ENCODE measurements at regions of chr1 and their contacts with region 1.

Region 1: DNA sequence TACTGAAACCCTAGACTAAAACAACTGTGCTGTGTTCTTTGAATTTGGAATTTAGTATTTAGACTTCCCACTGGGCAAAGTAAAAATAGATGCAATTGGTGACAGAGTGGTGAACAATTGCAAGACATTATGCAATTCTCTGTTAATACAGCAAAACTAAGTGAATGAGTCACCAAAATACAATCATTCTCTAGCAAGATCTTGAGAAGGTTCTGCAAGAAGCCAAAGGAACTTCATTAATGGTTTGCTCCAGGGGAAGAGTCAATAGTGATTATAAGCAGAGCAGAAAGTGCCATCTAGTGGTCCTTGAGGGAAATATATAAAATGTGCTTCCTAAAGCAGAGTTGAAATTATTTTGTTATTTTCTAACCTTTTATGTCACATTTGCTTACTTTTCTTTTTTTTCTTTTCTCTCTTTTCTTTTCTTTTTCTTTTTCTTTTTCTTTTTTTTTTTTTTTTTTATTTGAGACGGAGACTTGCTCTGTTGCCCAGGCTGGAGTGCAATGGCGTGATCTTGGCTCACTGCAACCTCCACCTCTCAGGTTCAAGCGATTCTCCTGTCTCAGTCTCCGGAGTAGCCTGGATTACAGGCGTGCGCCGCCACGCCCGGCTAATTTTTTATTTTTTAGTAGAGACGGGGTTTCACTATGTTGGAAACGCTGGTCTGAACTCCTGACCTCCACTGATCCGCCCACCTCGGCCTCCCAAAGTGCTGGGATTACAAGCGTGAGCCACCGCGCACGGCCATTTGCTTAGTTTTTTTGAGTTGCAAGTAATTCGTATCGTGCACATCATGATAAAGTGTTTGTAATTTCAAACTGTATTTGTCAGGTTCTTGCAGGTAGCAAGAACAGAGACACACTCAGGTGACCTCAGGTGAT is 99.2 kb downstream of the CTH start:
- DNase-seq: no peak
- H3K4me3 ChIP-seq: no peak overlapping the region
- H3K27ac ChIP-seq: no peak overlapping the region
- H3K4me1 ChIP-seq: no peaks in the 10 kb centered on the region
- H3K27me3 ChIP-seq: no peaks in the 10 kb centered on the region
- CTCF ChIP-seq: peak; percentile 50 to 67 (median 62)

Region 2: DNA sequence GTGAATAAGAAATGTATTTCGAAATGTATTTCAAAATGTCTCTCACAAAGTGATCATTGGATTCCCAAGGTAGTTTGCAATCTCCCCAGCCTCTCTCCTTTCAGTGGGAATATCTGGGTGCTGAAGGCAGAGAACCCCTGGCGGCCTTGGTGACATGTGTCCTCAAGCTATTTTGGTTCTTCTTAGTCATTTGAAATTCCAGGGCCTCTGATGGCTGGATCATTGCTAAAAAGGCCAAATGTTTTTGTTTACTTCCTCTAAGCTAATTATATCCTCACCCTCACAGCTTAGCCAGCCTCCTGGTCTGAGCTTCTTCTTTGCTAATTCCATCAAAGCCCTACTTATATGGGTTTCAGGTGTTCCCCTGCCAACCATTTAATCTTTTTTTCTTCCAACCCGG is 376.1 kb before region 1 on chr1:
- intact Hi-C with region 1: loop called (anchors 2 kb)
- DNase-seq: no peak
- H3K4me3 ChIP-seq: no peak overlapping the region
- H3K27ac ChIP-seq: no peak overlapping the region
- H3K4me1 ChIP-seq: no peaks in the 10 kb centered on the region
- H3K27me3 ChIP-seq: no peaks in the 10 kb centered on the region
- CTCF ChIP-seq: no peak

Region 3: DNA sequence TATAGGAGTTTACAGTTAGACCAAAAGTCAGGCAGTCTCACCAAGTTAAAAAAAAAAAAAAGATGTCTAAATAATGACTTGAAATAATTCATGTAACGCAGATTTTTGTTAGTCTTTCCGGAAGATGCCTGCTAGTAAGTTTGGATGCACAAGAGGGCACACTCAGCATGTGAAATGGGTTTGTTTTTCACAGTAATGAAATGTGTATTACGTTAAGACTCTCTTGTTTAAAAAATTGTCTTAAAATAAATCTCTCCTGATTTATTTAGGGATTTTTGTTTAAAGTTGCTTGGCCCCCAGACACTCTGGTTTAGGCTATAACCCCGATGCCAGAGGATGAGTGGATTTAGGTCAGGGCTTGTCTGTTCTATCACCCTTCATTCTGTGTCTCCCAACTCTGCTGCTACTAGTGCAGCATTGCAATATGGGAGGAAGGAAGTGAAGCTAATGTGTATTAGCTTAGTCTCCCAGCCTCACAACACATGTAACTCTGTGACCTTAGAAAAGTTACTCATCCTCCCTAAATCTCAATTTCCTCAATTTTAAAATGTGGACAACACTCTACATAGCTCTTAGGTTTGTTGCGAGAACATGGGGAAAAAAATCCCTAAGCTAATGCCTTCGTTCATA is 73.5 kb before region 1 on chr1:
- intact Hi-C with region 1: loop called (anchors 5 kb)
- DNase-seq: no peak
- H3K4me3 ChIP-seq: no peak overlapping the region
- H3K27ac ChIP-seq: no peak overlapping the region
- H3K4me1 ChIP-seq: no peaks in the 10 kb centered on the region
- H3K27me3 ChIP-seq: no peaks in the 10 kb centered on the region
- CTCF ChIP-seq: peak in 1 of 3 experiments; percentile 27

Region 4: GRCh38 chr1:70455291-70455690 is 54.9 kb before region 1 on chr1:
- intact Hi-C with region 1: no loop called
- DNase-seq: no peak
- H3K4me3 ChIP-seq: no peak overlapping the region
- H3K27ac ChIP-seq: no peak overlapping the region
- H3K4me1 ChIP-seq: no peaks in the 10 kb centered on the region
- H3K27me3 ChIP-seq: no peaks in the 10 kb centered on the region
- CTCF ChIP-seq: no peak